HepG2 (cell line): ENCODE measurements at regions of chr9 and their contacts with region 1.

Region 1: GRCh38 chr9:94900222-94901018 is 173.9 kb downstream of the AOPEP start:
- DNase-seq: no peak
- ATAC-seq: peak; percentile 55
- H3K4me3 ChIP-seq: peak overlapping the region; percentile 32 to 58 (median 56)
- H3K27ac ChIP-seq: peak overlapping the region; percentile 85
- H3K4me1 ChIP-seq: peaks cover 88% of the 10 kb centered on the region
- H3K27me3 ChIP-seq: no peaks in the 10 kb centered on the region
- CTCF ChIP-seq: no peak
- EP300 ChIP-seq: 0 out of 4 replicates have a peak, but pooled peaks of 1 of the 2 experiments have one; percentile 12
- POLR2A ChIP-seq: 0 out of 4 replicates have a peak, but pooled peaks of 1 of the 2 experiments have one; percentile 1
- RAD21 ChIP-seq: no peak

Region 2: GRCh38 chr9:94952565-94953373 is 52.3 kb after region 1 on chr9:
- CTCF ChIA-PET with region 1: no interaction called
- POLR2A ChIA-PET with region 1: interaction called, 3 read pairs
- in situ Hi-C with region 1: no loop called
- intact Hi-C with region 1: loop called (anchors 5 kb)
- DNase-seq: no peak
- ATAC-seq: no peak
- H3K4me3 ChIP-seq: no peak overlapping the region
- H3K27ac ChIP-seq: no peak overlapping the region
- H3K4me1 ChIP-seq: peaks cover 28% of the 10 kb centered on the region
- H3K27me3 ChIP-seq: no peaks in the 10 kb centered on the region
- CTCF ChIP-seq: no peak
- EP300 ChIP-seq: no peak
- POLR2A ChIP-seq: no peak
- RAD21 ChIP-seq: no peak

Region 3: GRCh38 chr9:94971378-94972131 is 71.1 kb after region 1 on chr9:
- CTCF ChIA-PET with region 1: no interaction called
- POLR2A ChIA-PET with region 1: no interaction called
- in situ Hi-C with region 1: no loop called
- intact Hi-C with region 1: no loop called
- DNase-seq: peak; percentile 82
- ATAC-seq: peak; percentile 89
- H3K4me3 ChIP-seq: 0 out of 6 replicates have a peak overlapping the region, but pooled peaks of 1 of the 3 experiments have one; percentile 8
- H3K27ac ChIP-seq: peak overlapping the region; percentile 78
- H3K4me1 ChIP-seq: peaks cover 84% of the 10 kb centered on the region
- H3K27me3 ChIP-seq: no peaks in the 10 kb centered on the region
- CTCF ChIP-seq: no peak
- EP300 ChIP-seq: peak in 1 of 2 experiments; percentile 96; a peak in 3 of 4 replicates
- POLR2A ChIP-seq: no peak
- RAD21 ChIP-seq: no peak